Activated T-helper 1 cell treated with anti-CD3 and anti-CD28 coated beads, Interleukin-12 subunit alpha, Interleukin-12 subunit beta, Interleukin-2, Interleukin-4 antibody, amounts not matched to agents 30 ng/mL and 10 ng/mL and 1 ng/mL, durations not matched to agents 14 hours and 24 hours and 36 hours (primary cell): ENCODE measurements at regions of chr1 and their contacts with region 1.

Region 1: GRCh38 chr1:12434174-12434573 is 183.8 kb downstream of the DHRS3 start:
- DNase-seq: peak; percentile 70
- H3K4me3 Mint-ChIP-seq: peak overlapping the region; percentile 32
- H3K27ac Mint-ChIP-seq: peak overlapping the region; percentile 92
- H3K4me1 Mint-ChIP-seq: peaks cover 67% of the 10 kb centered on the region
- H3K27me3 Mint-ChIP-seq: peaks cover 3% of the 10 kb centered on the region

Region 2: DNA sequence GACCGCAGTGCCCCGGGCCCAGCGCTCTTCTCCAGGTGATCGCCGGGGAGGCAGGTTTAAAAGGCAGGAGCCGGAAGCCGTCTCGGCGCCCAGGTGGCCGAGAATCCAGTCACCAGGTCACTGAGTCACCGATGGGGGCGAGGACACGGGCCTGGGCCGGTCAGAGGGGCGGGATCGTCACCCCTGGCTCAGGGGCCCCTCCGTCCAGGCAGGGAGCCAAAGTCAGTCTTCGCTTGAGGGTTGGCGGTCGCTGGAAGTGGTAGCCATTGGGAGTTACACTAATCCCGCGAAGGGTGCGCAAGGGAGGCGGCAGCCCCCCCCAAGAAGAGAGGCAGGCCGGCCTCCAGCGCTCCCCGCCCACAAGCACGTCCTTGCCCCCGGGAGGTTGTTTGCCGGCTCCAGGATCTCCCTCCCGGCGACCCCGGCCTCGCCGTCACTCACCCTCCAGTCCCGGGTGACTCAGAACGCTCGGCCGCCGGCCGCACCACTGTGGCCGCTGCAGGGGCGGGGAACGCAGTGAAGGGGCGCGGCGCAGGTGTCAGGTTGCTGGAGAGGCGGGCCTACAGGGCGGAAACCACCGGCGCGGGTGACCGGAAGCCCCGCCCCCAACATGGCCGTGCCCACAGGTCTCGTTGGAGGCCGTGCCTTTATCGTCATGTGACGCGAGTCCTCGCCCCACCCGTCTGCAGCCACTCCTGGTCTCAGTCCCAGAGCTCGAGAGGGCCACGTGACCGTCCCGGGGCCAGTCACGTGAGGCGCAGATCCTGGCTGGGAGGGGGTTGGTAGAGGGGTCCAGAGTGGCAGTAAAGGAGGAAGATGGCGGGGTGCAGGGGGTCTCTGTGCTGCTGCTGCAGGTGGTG is 628.5 kb before region 1 on chr1 and contains the starts of genes CLCN6 and MTHFR:
- intact Hi-C with region 1: loop called (anchors 5 kb)
- DNase-seq: peak; percentile 99
- H3K4me3 Mint-ChIP-seq: peak within 1 kb of the TSS; percentile 99
- H3K27ac Mint-ChIP-seq: peak within 1 kb of the TSS; percentile 98
- H3K4me1 Mint-ChIP-seq: peaks cover 66% of the 10 kb centered on the region
- H3K27me3 Mint-ChIP-seq: peaks cover 2% of the 10 kb centered on the region
- total RNA-seq, gene CLCN6: 11.2 and 14.3 TPM in 2 replicates
- total RNA-seq, gene MTHFR: 18.1 and 21.4 TPM in 2 replicates

Region 3: GRCh38 chr1:12067900-12068821 is 366.0 kb before region 1 on chr1:
- intact Hi-C with region 1: loop called (anchors 5 kb)
- DNase-seq: peak; percentile 47
- H3K4me3 Mint-ChIP-seq: peak overlapping the region; percentile 73
- H3K27ac Mint-ChIP-seq: peak overlapping the region; percentile 94
- H3K4me1 Mint-ChIP-seq: peaks cover 68% of the 10 kb centered on the region
- H3K27me3 Mint-ChIP-seq: peaks cover 2% of the 10 kb centered on the region

Region 4: GRCh38 chr1:12314333-12314903 is 119.8 kb before region 1 on chr1:
- intact Hi-C with region 1: no loop called
- DNase-seq: no peak
- H3K4me3 Mint-ChIP-seq: no peak overlapping the region
- H3K27ac Mint-ChIP-seq: no peak overlapping the region
- H3K4me1 Mint-ChIP-seq: peaks cover 8% of the 10 kb centered on the region
- H3K27me3 Mint-ChIP-seq: no peaks in the 10 kb centered on the region

Region 5: GRCh38 chr1:12344596-12345349 is 89.4 kb before region 1 on chr1:
- intact Hi-C with region 1: loop called (anchors 1 kb)
- DNase-seq: no peak
- H3K4me3 Mint-ChIP-seq: peak overlapping the region; percentile 74
- H3K27ac Mint-ChIP-seq: peak overlapping the region; percentile 70
- H3K4me1 Mint-ChIP-seq: peaks cover 63% of the 10 kb centered on the region
- H3K27me3 Mint-ChIP-seq: no peaks in the 10 kb centered on the region

Region 6: GRCh38 chr1:12448746-12449177 is 14.6 kb after region 1 on chr1:
- intact Hi-C with region 1: loop called (anchors 1 kb)
- DNase-seq: no peak
- H3K4me3 Mint-ChIP-seq: peak overlapping the region; percentile 53
- H3K27ac Mint-ChIP-seq: peak overlapping the region; percentile 84
- H3K4me1 Mint-ChIP-seq: peaks cover 83% of the 10 kb centered on the region
- H3K27me3 Mint-ChIP-seq: peaks cover 10% of the 10 kb centered on the region

Region 7: DNA sequence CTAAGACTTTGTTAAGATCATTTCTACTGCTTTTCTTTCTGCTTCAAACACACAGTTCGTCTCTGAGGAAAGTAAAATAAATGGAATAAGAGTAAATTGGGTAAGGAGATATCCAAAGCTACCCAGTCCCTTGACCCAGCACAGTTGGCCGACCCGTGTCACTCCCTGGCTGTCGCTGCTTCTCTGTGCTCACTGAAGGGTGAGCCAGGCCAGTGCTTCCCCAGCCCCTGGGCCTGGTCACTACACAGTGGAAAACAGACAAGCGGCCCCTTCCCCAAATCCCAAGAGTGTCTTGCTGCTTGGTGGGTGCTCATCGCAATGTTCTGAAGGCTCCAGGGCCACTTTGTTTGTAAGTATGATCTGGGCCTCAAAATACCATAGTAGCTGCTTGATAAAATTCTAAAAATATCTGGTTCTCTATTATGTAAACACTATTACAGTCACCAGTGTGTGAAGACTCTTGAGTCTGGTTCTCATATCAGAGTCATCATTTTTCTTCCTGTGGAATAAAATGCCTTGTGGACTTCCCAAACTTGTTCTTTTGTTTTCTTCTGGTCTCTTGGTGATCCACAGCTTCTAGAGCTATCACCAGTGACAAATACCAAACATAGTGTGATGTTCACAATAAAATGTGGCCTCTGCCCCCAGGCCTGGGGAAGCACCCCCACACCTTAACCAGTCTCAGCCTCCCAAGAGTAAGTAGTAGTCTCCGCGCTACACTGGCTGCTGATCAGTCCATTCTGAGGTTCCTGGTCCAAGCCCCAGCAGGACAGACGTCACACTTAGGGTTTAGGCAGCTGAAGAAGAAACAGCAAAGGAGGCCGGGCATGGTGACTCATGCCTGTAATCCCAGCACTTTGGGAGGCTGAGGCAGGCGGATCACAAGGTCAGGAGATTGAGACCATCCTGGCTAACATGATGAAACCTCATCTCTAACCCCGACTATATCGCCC is 77.6 kb after region 1 on chr1:
- intact Hi-C with region 1: loop called (anchors 1 kb)
- DNase-seq: no peak
- H3K4me3 Mint-ChIP-seq: peak overlapping the region; percentile 87
- H3K27ac Mint-ChIP-seq: peak overlapping the region; percentile 100
- H3K4me1 Mint-ChIP-seq: peaks cover 60% of the 10 kb centered on the region
- H3K27me3 Mint-ChIP-seq: no peaks in the 10 kb centered on the region